ENCODE measurements at regions of chr19 and their contacts with region 1.

Region 1: DNA sequence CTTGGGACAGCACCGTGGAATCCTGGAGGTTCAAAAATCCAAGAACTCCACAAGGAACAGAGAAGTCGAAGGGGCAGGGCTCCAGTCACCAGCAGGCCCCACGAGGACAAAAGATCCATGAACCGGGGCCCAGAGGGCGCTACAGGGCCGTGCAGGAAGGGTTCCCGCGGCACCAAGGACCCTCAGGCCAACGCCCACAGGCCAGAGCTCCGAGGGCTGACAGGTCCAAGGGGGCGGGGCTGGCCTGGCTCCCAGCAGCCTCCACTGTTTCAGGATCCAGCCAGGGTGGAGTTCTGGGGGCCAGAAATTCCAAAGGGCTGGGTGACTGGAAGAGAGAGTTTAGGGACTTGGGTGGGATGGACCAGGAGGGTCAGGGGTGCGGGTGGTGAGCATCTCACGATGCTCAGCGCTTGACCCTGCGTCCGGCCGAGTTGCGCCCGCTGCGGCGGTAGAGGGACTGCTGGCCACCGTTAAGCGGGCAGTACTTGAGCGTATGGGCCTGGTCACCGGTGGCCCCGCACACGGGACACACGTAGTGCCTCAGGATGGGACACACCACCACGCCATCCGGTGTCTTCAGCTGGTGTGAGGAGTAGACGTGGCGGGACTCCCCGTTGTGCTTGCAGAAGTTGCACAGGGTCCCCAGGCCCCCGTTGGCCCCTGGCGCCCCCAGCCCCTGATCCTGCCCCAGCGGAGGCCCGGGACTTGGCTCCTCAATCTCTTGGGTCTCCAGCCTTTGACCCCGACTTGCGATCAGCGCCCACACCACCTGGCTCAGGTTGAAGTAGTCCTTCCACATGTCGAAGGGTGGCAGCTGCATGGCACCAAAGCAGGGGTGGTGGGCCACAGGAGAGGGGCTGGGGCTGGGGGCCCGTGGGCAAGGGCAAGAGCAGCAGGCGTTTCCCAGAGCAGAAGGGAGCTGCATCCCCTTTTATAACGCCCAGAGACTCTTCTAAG is at the start of gene NANOS2:
- DNase-seq: no peak
- H3K4me3 ChIP-seq: no peak within 1 kb of the TSS
- H3K27ac ChIP-seq: no peak within 1 kb of the TSS
- H3K4me1 ChIP-seq: no peaks in the 10 kb centered on the region
- H3K27me3 ChIP-seq: no peaks in the 10 kb centered on the region
- CTCF ChIP-seq: no peak
- EP300 ChIP-seq: no peak
- POLR2A ChIP-seq: no peak
- total RNA-seq, gene NANOS2: not detected

Region 2: GRCh38 chr19:45817010-45817724 is 97.0 kb before region 1 on chr19:
- intact Hi-C with region 1: no loop called
- DNase-seq: peak; percentile 90 to 96 (median 94)
- H3K4me3 ChIP-seq: no peak overlapping the region
- H3K27ac ChIP-seq: no peak overlapping the region
- H3K4me1 ChIP-seq: peaks cover 5% of the 10 kb centered on the region
- H3K27me3 ChIP-seq: no peaks in the 10 kb centered on the region
- CTCF ChIP-seq: peak; percentile 90 to 98 (median 90)
- EP300 ChIP-seq: no peak
- POLR2A ChIP-seq: no peak

Region 3: GRCh38 chr19:45827459-45828093 is 86.6 kb before region 1 on chr19:
- intact Hi-C with region 1: no loop called
- DNase-seq: no peak
- H3K4me3 ChIP-seq: no peak overlapping the region
- H3K27ac ChIP-seq: no peak overlapping the region
- H3K4me1 ChIP-seq: no peaks in the 10 kb centered on the region
- H3K27me3 ChIP-seq: no peaks in the 10 kb centered on the region
- CTCF ChIP-seq: no peak
- EP300 ChIP-seq: no peak
- POLR2A ChIP-seq: no peak

Region 4: GRCh38 chr19:45848922-45849321 is 65.2 kb before region 1 on chr19:
- intact Hi-C with region 1: no loop called
- DNase-seq: no peak
- H3K4me3 ChIP-seq: no peak overlapping the region
- H3K27ac ChIP-seq: no peak overlapping the region
- H3K4me1 ChIP-seq: no peaks in the 10 kb centered on the region
- H3K27me3 ChIP-seq: no peaks in the 10 kb centered on the region
- CTCF ChIP-seq: no peak
- EP300 ChIP-seq: no peak
- POLR2A ChIP-seq: no peak

Region 5: DNA sequence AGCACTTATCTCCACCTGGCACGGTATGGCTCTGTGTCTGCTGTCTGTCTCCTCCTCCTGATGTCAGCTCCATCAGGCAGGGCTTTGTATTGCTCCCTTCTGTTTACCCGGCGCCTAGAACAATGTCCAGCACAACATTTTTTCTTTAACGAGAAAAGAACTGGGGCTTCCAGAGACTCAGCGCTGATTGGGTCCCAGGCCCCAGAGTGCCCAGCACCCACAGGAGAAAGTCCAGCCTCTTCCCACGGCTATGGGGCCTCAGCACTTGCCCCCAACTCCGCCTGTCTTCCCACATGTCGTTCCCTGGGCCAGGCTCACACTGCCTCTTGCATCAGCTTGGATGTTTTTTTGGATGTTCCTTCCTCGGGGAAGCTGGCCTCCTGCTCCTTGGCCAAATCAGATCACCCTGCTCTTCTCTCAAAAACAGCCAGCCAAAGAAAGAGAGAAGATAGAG is 18.6 kb before region 1 on chr19:
- intact Hi-C with region 1: no loop called
- DNase-seq: no peak
- H3K4me3 ChIP-seq: no peak overlapping the region
- H3K27ac ChIP-seq: no peak overlapping the region
- H3K4me1 ChIP-seq: no peaks in the 10 kb centered on the region
- H3K27me3 ChIP-seq: no peaks in the 10 kb centered on the region
- CTCF ChIP-seq: no peak
- EP300 ChIP-seq: no peak
- POLR2A ChIP-seq: no peak

Region 6: GRCh38 chr19:46009530-46010510 is 95.7 kb after region 1 on chr19:
- intact Hi-C with region 1: loop called in 1 of 4 experiments (anchors 10 kb)
- DNase-seq: peak in 4 of 5 donors; percentile 52 to 77 (median 62)
- H3K4me3 ChIP-seq: no peak overlapping the region
- H3K27ac ChIP-seq: no peak overlapping the region
- H3K4me1 ChIP-seq: no peaks in the 10 kb centered on the region
- H3K27me3 ChIP-seq: peaks cover 3% of the 10 kb centered on the region
- CTCF ChIP-seq: peak; percentile 48 to 70 (median 54)
- EP300 ChIP-seq: no peak
- POLR2A ChIP-seq: no peak